HepG2 (cell line): ENCODE measurements at regions of chr5 and their contacts with region 1.

Region 1: GRCh38 chr5:127959152-127959764 is 124.3 kb upstream of the SLC12A2 start:
- DNase-seq: peak; percentile 59
- ATAC-seq: no peak; the same call in 1 of the 3 replicates
- H3K4me3 ChIP-seq: no peak overlapping the region
- H3K27ac ChIP-seq: peak overlapping the region; percentile 57
- H3K4me1 ChIP-seq: peaks cover 40% of the 10 kb centered on the region
- H3K27me3 ChIP-seq: no peaks in the 10 kb centered on the region
- CTCF ChIP-seq: no peak
- EP300 ChIP-seq: no peak
- POLR2A ChIP-seq: no peak
- RAD21 ChIP-seq: no peak

Region 2: DNA sequence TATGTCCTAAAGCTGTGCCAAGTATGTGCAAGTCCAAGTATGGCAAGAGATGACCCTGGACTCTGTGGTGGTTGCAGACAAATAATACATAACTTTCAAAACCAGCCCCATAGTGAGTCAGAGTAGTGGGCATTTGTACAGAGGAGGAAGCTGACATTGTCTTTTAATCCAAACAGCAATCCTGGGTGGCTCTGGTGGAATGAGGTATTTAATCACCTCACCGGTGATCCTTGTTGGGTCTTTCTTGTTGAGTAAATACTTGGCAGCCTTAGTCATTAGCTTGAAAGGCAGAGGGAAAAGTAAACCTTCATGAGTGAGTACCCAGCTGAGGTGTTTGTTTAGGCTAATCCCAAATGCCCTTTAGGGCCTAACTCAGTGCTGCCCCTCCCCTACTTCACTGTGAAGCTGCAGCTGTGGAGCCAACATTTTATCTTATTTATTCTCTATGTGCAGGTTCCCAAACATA is 24.4 kb before region 1 on chr5:
- CTCF ChIA-PET with region 1: no interaction called
- POLR2A ChIA-PET with region 1: no interaction called
- in situ Hi-C with region 1: no loop called
- intact Hi-C with region 1: loop called (anchors 2 kb)
- DNase-seq: peak; percentile 97
- ATAC-seq: peak; percentile 97
- H3K4me3 ChIP-seq: no peak overlapping the region
- H3K27ac ChIP-seq: no peak overlapping the region
- H3K4me1 ChIP-seq: peaks cover 24% of the 10 kb centered on the region
- H3K27me3 ChIP-seq: 0 out of 5 replicates have a peak, but pooled peaks cover 0 to 3% of the 10 kb centered on the region in 2 experiments
- CTCF ChIP-seq: peak; percentile 43
- EP300 ChIP-seq: peak in 1 of 2 experiments; percentile 70; a peak in 2 of 4 replicates
- POLR2A ChIP-seq: no peak
- RAD21 ChIP-seq: no peak

Region 3: GRCh38 chr5:128014578-128014977 is 55.3 kb after region 1 on chr5:
- CTCF ChIA-PET with region 1: no interaction called
- POLR2A ChIA-PET with region 1: no interaction called
- in situ Hi-C with region 1: no loop called
- intact Hi-C with region 1: no loop called
- DNase-seq: no peak
- ATAC-seq: no peak
- H3K4me3 ChIP-seq: no peak overlapping the region
- H3K27ac ChIP-seq: no peak overlapping the region
- H3K4me1 ChIP-seq: no peaks in the 10 kb centered on the region
- H3K27me3 ChIP-seq: no peaks in the 10 kb centered on the region
- CTCF ChIP-seq: no peak
- EP300 ChIP-seq: no peak
- POLR2A ChIP-seq: no peak
- RAD21 ChIP-seq: no peak

Region 4: DNA sequence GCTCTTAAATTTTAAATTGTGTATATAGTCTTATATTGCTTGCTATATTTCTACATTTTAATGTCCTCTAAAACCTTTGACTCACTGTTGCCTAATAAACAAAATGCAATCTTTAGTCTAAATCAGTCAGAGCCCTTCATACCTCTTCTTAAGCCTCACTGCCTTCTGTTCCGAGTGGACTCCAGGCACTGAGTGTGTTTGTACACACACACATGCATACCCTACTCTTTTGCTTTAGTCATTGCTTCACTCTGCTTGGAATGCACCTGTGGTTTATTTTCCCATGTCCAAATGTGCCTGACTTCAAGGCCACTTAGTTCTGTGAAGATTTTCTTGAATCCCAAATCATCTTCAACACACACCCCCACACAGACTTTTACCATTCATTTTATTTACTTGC is 185.2 kb after region 1 on chr5:
- CTCF ChIA-PET with region 1: no interaction called
- POLR2A ChIA-PET with region 1: no interaction called
- in situ Hi-C with region 1: no loop called
- intact Hi-C with region 1: no loop called
- DNase-seq: peak; percentile 0
- ATAC-seq: no peak
- H3K4me3 ChIP-seq: no peak overlapping the region
- H3K27ac ChIP-seq: no peak overlapping the region
- H3K4me1 ChIP-seq: no peaks in the 10 kb centered on the region
- H3K27me3 ChIP-seq: no peaks in the 10 kb centered on the region
- CTCF ChIP-seq: no peak
- EP300 ChIP-seq: no peak
- POLR2A ChIP-seq: no peak
- RAD21 ChIP-seq: no peak